OCI-LY7 (cell line): ENCODE measurements at regions of chr13 and their contacts with region 1.

Region 1: DNA sequence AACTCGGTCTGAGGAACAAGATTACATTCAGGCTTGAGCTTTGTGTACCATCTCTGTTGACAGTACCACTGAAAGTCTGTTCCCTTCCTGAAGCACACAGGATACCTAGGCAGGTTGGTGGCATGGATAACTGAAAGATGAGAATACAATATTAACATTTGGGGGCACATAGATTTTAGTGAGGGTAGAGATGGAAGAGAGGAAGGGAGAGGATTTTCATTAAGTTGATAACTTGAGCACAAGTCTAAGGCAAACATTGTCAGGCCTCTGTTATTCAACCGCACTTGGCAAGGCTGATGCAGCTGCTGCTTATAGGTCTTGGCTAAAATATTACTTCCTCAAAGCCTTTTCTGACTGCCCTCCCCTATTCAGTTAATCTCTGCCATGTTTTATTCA is 10.9 kb downstream of the MIR17HG start:
- DNase-seq: peak; percentile 86
- H3K4me3 ChIP-seq: no peak overlapping the region
- H3K27ac ChIP-seq: peak overlapping the region; percentile 26
- H3K4me1 ChIP-seq: peaks cover 50% of the 10 kb centered on the region
- CTCF ChIP-seq: no peak

Region 2: DNA sequence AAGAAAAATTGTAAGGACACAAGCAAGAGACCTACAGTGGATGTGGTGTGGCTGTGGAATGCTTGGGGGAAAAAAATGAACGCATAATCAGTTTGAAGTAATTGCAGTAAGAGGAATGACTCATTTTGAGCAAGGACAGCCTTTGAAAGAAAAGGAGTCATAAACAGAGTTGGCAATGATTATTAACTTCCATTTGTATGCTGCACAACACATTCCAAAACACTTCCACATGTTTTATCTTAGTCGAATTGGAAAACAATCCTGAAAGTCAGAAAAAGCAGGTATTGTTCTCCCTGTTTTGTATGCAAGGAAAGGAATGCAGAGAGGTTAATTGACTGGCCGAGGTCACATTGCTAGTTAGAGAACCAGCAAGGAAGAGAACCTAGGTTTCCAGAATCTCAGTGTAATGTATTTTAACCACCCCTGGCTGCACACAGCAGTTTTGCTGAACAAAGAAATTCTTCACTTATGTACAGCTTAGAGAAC is 640.9 kb before region 1 on chr13:
- CTCF ChIA-PET with region 1: no interaction called
- POLR2A ChIA-PET with region 1: no interaction called
- intact Hi-C with region 1: no loop called
- DNase-seq: no peak
- H3K4me3 ChIP-seq: no peak overlapping the region
- H3K27ac ChIP-seq: no peak overlapping the region
- H3K4me1 ChIP-seq: no peaks in the 10 kb centered on the region
- CTCF ChIP-seq: no peak

Region 3: DNA sequence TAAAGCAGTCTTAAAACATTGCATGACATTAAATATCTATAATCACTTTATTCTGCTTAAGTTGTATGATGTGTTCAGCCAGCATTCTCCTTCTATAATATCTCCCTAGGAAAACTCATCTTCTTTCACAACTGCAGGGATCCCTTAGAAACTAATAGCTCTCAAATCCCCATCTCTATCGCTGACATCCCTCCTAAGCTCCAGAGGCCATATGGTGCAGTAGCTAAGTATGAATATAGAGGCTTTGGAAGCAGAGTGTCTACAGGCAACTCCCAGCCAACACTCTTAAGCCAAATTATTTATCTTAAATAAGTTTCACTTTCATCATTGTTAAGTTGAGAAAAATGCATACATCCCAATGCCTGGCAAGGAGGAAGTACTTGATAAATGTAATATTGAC is 360.4 kb before region 1 on chr13:
- CTCF ChIA-PET with region 1: no interaction called
- POLR2A ChIA-PET with region 1: no interaction called
- intact Hi-C with region 1: no loop called
- DNase-seq: no peak
- H3K4me3 ChIP-seq: no peak overlapping the region
- H3K27ac ChIP-seq: no peak overlapping the region
- H3K4me1 ChIP-seq: no peaks in the 10 kb centered on the region
- CTCF ChIP-seq: no peak

Region 4: DNA sequence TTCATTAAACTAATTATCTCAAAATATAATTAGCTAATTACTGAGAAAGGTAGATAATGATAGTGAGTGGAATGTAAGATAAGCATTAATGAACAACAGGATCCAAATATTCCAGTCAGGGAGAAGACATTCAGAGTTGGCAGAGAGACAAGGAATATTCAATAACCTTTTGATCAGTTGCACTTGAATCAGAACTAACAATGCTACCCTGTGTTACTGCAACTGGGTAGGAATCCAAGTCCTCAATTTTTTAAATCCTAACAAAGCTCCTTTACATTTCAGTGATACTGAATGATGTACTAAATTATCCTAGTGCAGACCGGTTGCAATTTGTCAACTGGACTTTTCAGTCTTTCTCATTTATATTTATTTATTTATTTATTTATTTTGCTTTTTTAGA is 118.0 kb before region 1 on chr13:
- CTCF ChIA-PET with region 1: no interaction called
- POLR2A ChIA-PET with region 1: no interaction called
- intact Hi-C with region 1: no loop called
- DNase-seq: no peak
- H3K4me3 ChIP-seq: no peak overlapping the region
- H3K27ac ChIP-seq: no peak overlapping the region
- H3K4me1 ChIP-seq: no peaks in the 10 kb centered on the region
- CTCF ChIP-seq: no peak

Region 5: DNA sequence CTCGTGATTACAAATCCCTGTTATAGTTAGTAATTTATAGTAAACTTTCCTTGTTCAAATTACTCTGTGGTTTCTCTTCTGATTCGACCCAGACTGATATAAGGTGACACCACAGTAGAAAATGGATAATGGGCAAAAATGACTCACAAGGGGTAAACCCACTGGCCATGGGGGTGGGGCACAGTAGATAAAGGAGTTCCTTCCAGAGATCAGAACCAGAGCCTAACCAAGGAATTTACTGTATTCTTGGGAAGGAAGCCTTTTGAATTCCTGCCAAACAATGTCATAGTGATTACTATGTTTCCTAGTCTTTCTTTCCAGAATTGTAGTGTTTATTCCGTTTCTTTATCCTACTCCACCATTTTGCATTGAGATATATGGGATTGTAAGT is 11.1 kb after region 1 on chr13:
- CTCF ChIA-PET with region 1: interaction called, 5 read pairs
- POLR2A ChIA-PET with region 1: interaction called, 33 read pairs
- intact Hi-C with region 1: no loop called
- DNase-seq: no peak
- H3K4me3 ChIP-seq: no peak overlapping the region
- H3K27ac ChIP-seq: no peak overlapping the region
- H3K4me1 ChIP-seq: no peaks in the 10 kb centered on the region
- CTCF ChIP-seq: no peak

Region 6: DNA sequence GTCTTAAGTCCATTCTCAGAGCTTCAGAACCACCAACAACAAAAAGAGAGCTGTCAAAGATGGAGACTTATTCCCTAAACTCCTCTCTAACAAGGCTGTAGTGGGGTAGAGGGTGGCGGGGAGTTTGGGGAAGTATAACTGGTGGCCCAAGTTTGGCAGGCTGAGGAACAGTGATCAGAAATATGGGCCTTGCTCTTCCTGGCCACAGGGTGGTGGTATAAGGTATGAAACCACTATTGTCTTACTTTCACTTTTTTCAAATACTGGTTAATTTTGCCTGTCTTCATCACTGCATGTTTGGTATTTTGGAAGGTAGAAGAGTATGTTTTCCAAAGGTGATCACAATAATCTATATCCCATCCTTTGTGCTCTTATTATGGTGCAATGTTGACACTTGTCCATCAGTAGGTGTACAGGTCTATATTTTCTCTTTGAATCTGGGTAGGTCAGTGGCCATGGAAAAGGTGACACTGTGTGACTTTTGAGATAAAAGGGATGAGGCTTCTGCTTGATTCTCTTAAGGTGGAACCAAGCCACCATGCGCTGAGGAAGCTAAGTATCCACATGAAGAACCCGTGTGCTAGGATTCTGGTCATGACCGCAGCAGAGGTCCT is 16.8 kb after region 1 on chr13:
- CTCF ChIA-PET with region 1: interaction called, 3 read pairs
- POLR2A ChIA-PET with region 1: interaction called, 33 read pairs
- intact Hi-C with region 1: no loop called
- DNase-seq: peak; percentile 85
- H3K4me3 ChIP-seq: no peak overlapping the region
- H3K27ac ChIP-seq: no peak overlapping the region
- H3K4me1 ChIP-seq: no peaks in the 10 kb centered on the region
- CTCF ChIP-seq: no peak

Region 7: DNA sequence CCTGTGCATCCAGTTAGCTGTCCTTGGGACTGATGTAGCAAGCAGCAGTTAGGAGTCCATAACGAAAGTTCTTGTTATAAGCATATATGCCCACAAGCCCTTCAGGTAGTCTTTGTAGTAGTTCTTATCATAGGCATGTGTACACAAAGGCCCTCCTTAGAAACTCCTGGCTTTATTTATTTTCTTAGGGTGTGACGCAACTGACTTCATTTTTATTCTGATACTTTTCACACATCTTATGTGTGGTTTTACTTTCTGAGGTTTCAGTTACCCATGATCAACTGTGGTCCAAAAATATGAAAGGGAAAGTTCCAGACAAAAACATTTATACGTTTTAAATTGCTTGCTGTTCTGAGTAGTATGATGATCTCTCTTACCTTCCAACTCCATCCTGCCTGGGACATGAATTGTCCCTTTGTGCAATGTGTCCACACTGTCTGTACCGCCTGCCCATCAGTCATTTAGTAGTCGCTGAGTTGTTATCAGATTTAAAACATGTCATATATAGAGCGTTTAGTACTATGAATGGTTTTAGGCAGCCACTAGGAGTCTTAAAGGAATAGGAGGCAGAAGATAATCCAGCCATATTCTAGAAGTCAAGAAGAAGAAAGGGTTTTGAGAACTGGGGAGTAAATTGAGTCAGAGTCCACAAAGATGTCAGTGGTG is 59.4 kb after region 1 on chr13:
- CTCF ChIA-PET with region 1: no interaction called
- POLR2A ChIA-PET with region 1: no interaction called
- intact Hi-C with region 1: no loop called
- DNase-seq: no peak
- H3K4me3 ChIP-seq: no peak overlapping the region
- H3K27ac ChIP-seq: no peak overlapping the region
- H3K4me1 ChIP-seq: no peaks in the 10 kb centered on the region
- CTCF ChIP-seq: no peak